GM10248 (cell line): ENCODE measurements at regions of chr17 and their contacts with region 1.

Region 1: DNA sequence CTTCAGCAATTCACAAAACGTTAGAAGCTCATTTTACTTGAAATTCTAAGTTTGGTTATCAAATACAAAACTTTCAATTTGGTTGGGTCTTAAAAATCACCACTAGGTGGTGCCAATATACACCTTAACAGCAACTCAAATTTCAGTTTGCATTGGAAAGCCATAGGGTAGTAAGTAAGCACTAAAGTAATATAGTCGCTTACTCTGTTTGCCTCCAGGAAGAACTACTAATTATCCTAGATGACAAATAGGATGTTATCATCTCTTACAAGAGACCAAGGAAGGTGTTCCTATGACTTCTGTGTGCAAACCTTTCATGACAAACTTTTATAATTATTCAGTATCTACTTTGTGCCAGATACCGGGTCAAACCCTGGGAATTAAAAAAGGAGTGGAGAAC is 93.3 kb downstream of the MYO1D start:
- DNase-seq: peak; percentile 61
- CTCF ChIP-seq: peak; percentile 54

Region 2: DNA sequence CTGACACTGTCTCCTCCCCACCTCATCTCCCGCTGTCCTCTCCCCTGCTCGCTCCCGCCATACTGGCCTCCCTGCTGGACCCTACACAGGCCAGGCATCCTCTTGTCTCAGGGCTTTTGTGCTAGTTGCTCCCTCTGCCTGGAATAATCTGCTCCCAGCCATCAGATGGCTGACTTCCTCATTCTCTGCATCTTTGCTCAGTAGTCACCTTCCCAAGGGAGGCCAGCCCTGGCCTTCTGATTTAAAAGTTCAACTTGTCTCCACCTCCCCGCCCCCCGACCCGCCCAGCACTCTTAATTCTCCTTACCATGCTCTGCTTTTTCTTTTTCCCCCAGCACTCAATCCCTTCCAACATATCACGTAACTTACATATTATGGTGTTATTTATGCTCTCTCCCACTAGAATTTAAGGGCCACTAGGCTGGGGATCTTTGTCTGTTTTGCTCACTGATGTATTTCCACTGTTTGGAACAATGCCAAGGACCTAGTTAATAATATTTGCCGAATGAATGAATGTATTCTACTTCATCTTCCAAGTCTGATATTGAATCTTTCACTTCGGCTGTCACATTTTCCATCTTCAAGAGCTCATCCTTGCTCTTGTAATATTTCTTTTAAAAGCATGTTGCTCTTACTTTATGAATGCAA is 118.5 kb before region 1 on chr17:
- CTCF ChIA-PET with region 1: no interaction called
- POLR2A ChIA-PET with region 1: no interaction called
- DNase-seq: no peak
- CTCF ChIP-seq: no peak

Region 3: DNA sequence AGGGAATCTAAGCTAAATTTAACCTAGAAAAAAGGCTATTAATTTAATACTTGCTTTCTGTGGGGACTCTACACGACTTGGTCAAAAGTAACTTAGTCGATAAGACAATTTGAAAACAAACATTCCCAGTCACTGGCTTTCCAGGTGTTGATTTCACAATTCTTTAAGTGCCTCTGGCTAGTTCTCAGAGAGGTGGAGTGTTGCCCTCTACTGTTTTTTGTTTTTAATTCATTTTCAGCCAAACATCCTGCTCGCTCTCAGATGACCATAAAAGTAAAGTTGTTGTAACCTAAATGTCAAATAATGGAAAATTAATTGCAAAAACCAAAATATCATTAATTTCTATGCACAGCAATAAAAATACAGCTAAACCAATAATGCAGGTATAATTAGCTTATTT is 13.8 kb before region 1 on chr17:
- CTCF ChIA-PET with region 1: interaction called, 21 read pairs
- POLR2A ChIA-PET with region 1: no interaction called
- DNase-seq: no peak
- CTCF ChIP-seq: peak; percentile 9

Region 4: GRCh38 chr17:32803544-32803943 is 19.9 kb after region 1 on chr17:
- CTCF ChIA-PET with region 1: interaction called, 42 read pairs
- POLR2A ChIA-PET with region 1: no interaction called
- DNase-seq: no peak
- CTCF ChIP-seq: no peak

Region 5: DNA sequence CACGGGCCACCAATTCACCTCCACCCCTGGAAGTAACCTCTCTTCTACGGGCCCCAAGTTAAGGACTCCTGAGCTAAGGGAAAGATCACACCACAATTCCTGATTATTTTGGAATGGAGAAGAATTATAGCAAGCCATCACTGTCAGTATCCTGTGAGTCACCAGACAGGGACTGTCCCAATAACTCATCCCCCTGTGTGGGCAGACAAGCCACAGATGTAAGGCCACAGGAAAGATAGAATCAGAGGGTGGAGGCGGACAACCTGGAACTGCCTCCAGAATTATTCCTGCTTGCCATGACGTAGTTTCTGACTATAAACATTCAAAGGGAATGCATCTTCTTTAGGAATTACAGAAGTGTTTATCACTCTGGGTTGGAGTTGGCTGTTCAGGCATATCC is 99.1 kb after region 1 on chr17:
- CTCF ChIA-PET with region 1: interaction called, 204 read pairs
- POLR2A ChIA-PET with region 1: interaction called, 4 read pairs
- DNase-seq: peak; percentile 41
- CTCF ChIP-seq: no peak

Region 6: GRCh38 chr17:32915245-32915644 is 131.6 kb after region 1 on chr17:
- CTCF ChIA-PET with region 1: interaction called, 66 read pairs
- POLR2A ChIA-PET with region 1: no interaction called
- DNase-seq: no peak
- CTCF ChIP-seq: no peak

Region 7: DNA sequence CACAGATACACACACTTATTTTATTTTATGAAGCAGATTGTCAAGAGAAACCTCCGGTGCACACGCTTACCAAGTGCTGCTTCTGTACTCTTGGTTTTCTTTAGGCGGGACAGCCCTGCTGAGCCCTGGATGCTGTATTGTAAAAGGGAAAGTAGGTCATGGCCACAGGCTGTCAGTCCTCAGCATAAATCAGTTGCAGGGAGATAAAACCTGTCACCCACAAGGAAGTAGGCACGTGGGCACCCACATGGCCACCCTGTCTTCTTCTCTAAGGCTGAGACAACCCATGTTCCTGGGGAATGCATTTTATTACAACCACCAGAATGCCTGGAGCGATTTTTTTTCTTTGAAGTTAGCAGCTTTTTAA is 450.2 kb after region 1 on chr17:
- CTCF ChIA-PET with region 1: no interaction called
- POLR2A ChIA-PET with region 1: no interaction called
- DNase-seq: no peak
- CTCF ChIP-seq: no peak